Transverse colon (tissue), 4 donors: ENCODE measurements at regions of chr1 and their contacts with region 1.

Region 1: GRCh38 chr1:92663775-92664174 is 121.1 kb downstream of the EVI5 start:
- DNase-seq: no peak
- H3K4me3 ChIP-seq: no peak overlapping the region
- H3K27ac ChIP-seq: no peak overlapping the region
- H3K4me1 ChIP-seq: no peaks in the 10 kb centered on the region
- H3K27me3 ChIP-seq: no peaks in the 10 kb centered on the region
- CTCF ChIP-seq: no peak
- EP300 ChIP-seq: no peak
- POLR2A ChIP-seq: no peak

Region 2: GRCh38 chr1:93155335-93155734 is 491.6 kb after region 1 on chr1:
- in situ Hi-C with region 1: no loop called
- intact Hi-C with region 1: loop called (anchors 5 kb)
- DNase-seq: no peak
- H3K4me3 ChIP-seq: no peak overlapping the region
- H3K27ac ChIP-seq: no peak overlapping the region
- H3K4me1 ChIP-seq: peaks cover 0 to 25% (median 4%) of the 10 kb centered on the region in 4 donors
- H3K27me3 ChIP-seq: no peaks in the 10 kb centered on the region
- CTCF ChIP-seq: no peak
- EP300 ChIP-seq: no peak
- POLR2A ChIP-seq: no peak

Region 3: GRCh38 chr1:93171549-93172034 is 507.8 kb after region 1 on chr1:
- in situ Hi-C with region 1: no loop called
- intact Hi-C with region 1: no loop called
- DNase-seq: no peak
- H3K4me3 ChIP-seq: no peak overlapping the region
- H3K27ac ChIP-seq: no peak overlapping the region
- H3K4me1 ChIP-seq: peaks cover 4 to 29% (median 8%) of the 10 kb centered on the region in 4 donors
- H3K27me3 ChIP-seq: no peaks in the 10 kb centered on the region
- CTCF ChIP-seq: no peak
- EP300 ChIP-seq: no peak
- POLR2A ChIP-seq: no peak

Region 4: DNA sequence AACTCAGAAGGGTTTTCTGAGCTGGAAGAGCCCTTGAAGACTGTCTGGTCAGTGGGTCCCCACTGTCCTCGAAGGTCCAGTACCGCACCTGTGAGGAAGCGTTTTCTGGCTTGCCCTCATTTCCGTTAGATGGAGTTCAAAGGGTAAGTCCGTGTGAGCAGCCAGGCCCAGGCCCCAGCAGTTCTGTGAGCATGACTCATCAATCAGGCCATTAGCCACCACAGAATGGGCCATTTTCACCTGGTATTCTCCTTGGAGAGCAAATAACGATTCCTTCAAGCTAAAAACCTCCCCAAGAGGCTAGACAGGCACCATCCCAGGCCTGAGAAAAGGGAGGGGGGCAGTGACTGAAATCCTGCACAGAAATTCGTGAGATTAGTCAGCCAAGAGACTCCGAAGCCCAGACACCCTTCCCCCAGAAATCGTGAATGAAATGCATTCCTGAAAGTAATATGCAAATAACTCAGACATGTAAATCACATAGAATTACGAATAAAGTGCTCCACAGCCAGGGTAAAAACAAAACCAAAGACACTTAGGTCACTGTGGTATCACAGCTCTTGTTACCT is 951.9 kb after region 1 on chr1:
- in situ Hi-C with region 1: no loop called
- intact Hi-C with region 1: loop called (anchors 5 kb)
- DNase-seq: peak; percentile 28
- H3K4me3 ChIP-seq: no peak overlapping the region
- H3K27ac ChIP-seq: peak overlapping the region; percentile 42 to 91 (median 64)
- H3K4me1 ChIP-seq: peaks cover 30 to 76% (median 62%) of the 10 kb centered on the region in 4 donors
- H3K27me3 ChIP-seq: no peaks in the 10 kb centered on the region
- CTCF ChIP-seq: no peak
- EP300 ChIP-seq: no peak
- POLR2A ChIP-seq: no peak